ENCODE measurements at regions of chr14 and their contacts with region 1.

Region 1: GRCh38 chr14:73633116-73634010 is 11.4 kb upstream of the DNAL1 start:
- DNase-seq: peak; percentile 80
- CTCF ChIP-seq: peak; percentile 65

Region 2: GRCh38 chr14:72023722-72024407 is 1609.5 kb before region 1 on chr14:
- in situ Hi-C with region 1: no loop called
- DNase-seq: peak; percentile 43
- CTCF ChIP-seq: peak; percentile 61

Region 3: GRCh38 chr14:73248108-73248868 is 385.1 kb before region 1 on chr14:
- in situ Hi-C with region 1: no loop called
- DNase-seq: no peak
- CTCF ChIP-seq: no peak

Region 4: GRCh38 chr14:73491256-73492042 is 141.9 kb before region 1 on chr14:
- in situ Hi-C with region 1: loop called (anchors 10 kb)
- DNase-seq: peak; percentile 88
- CTCF ChIP-seq: no peak

Measured in GM13976 (cell line).